MCF 10A (cell line): ENCODE measurements at regions of chr2 and their contacts with region 1.

Region 1: GRCh38 chr2:74198461-74199274 is at the start of gene MTHFD2:
- DNase-seq: peak; percentile 99
- H3K4me3 Mint-ChIP-seq: peak within 1 kb of the TSS; percentile 94
- H3K27ac Mint-ChIP-seq: peak within 1 kb of the TSS; percentile 97
- H3K4me1 Mint-ChIP-seq: peaks cover 27% of the 10 kb centered on the region
- H3K27me3 Mint-ChIP-seq: no peaks in the 10 kb centered on the region
- CTCF ChIP-seq: peak; percentile 70
- total RNA-seq, gene MTHFD2: 387 and 470 TPM in 2 replicates

Region 2: GRCh38 chr2:74119912-74120825 is 78.5 kb before region 1 on chr2:
- CTCF ChIA-PET with region 1: no interaction called
- POLR2A ChIA-PET with region 1: no interaction called
- intact Hi-C with region 1: loop called (anchors 2 kb)
- DNase-seq: peak; percentile 71
- H3K4me3 Mint-ChIP-seq: peak overlapping the region; percentile 82
- H3K27ac Mint-ChIP-seq: peak overlapping the region; percentile 89
- H3K4me1 Mint-ChIP-seq: peaks cover 4% of the 10 kb centered on the region
- H3K27me3 Mint-ChIP-seq: no peaks in the 10 kb centered on the region
- CTCF ChIP-seq: peak; percentile 39

Region 3: GRCh38 chr2:74147727-74148456 is 50.8 kb before region 1 on chr2 and contains the start of gene BOLA3:
- CTCF ChIA-PET with region 1: interaction called, 4 read pairs
- POLR2A ChIA-PET with region 1: interaction called, 29 read pairs
- intact Hi-C with region 1: no loop called
- DNase-seq: peak; percentile 80
- H3K4me3 Mint-ChIP-seq: no peak within 1 kb of the TSS
- H3K27ac Mint-ChIP-seq: no peak within 1 kb of the TSS
- H3K4me1 Mint-ChIP-seq: no peaks in the 10 kb centered on the region
- H3K27me3 Mint-ChIP-seq: no peaks in the 10 kb centered on the region
- CTCF ChIP-seq: peak; percentile 70
- total RNA-seq, gene BOLA3: 72.5 and 83.8 TPM in 2 replicates

Region 4: GRCh38 chr2:74188018-74188601 is 10.6 kb before region 1 on chr2:
- CTCF ChIA-PET with region 1: interaction called, 3 read pairs
- POLR2A ChIA-PET with region 1: interaction called, 57 read pairs
- intact Hi-C with region 1: loop called (anchors 1 kb)
- DNase-seq: peak; percentile 93
- H3K4me3 Mint-ChIP-seq: peak overlapping the region; percentile 42
- H3K27ac Mint-ChIP-seq: peak overlapping the region; percentile 64
- H3K4me1 Mint-ChIP-seq: peaks cover 15% of the 10 kb centered on the region
- H3K27me3 Mint-ChIP-seq: no peaks in the 10 kb centered on the region
- CTCF ChIP-seq: no peak

Region 5: DNA sequence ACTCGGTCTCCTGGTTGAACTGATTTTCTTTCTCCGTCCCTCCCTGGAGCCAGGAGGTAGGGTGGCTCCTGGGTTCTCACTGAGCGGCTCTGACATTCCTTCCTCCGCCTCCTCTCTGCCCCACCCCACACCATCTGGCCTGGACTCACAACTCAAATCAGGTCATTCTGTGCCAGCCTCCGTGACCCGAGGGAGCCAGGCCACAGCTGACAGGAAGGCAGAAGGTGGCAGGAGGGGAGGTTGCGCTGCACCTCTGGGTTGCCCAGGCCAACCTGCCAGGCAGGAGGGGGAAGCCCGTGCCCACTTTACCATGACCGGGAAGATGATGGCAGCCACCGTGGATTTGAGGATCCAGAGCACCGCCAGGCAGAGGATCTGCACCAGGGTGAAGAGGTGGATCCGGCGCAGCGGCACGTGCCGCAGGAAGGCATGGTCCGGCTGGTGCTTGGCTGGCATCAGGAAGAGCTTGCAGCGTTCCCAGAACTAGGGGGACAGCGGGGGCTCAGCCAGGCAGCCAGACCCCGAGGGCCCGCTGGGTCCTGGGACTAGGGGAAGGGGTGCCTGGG is 28.1 kb after region 1 on chr2:
- CTCF ChIA-PET with region 1: no interaction called
- POLR2A ChIA-PET with region 1: interaction called, 10 read pairs
- intact Hi-C with region 1: no loop called
- DNase-seq: peak; percentile 59
- H3K4me3 Mint-ChIP-seq: peak overlapping the region; percentile 60
- H3K27ac Mint-ChIP-seq: peak overlapping the region; percentile 84
- H3K4me1 Mint-ChIP-seq: peaks cover 17% of the 10 kb centered on the region
- H3K27me3 Mint-ChIP-seq: no peaks in the 10 kb centered on the region
- CTCF ChIP-seq: no peak